PC-3 (cell line): ENCODE measurements at regions of chr12 and their contacts with region 1.

Region 1: GRCh38 chr12:15636060-15636890 is 152.9 kb downstream of the EPS8 start:
- DNase-seq: peak; percentile 33
- ATAC-seq: peak; percentile 48
- H3K4me3 ChIP-seq: no peak overlapping the region
- H3K27ac ChIP-seq: peak overlapping the region; percentile 92
- H3K4me1 ChIP-seq: peaks cover 57% of the 10 kb centered on the region
- H3K27me3 ChIP-seq: no peaks in the 10 kb centered on the region
- CTCF ChIP-seq: no peak; the same call in 1 of the 2 replicates

Region 2: DNA sequence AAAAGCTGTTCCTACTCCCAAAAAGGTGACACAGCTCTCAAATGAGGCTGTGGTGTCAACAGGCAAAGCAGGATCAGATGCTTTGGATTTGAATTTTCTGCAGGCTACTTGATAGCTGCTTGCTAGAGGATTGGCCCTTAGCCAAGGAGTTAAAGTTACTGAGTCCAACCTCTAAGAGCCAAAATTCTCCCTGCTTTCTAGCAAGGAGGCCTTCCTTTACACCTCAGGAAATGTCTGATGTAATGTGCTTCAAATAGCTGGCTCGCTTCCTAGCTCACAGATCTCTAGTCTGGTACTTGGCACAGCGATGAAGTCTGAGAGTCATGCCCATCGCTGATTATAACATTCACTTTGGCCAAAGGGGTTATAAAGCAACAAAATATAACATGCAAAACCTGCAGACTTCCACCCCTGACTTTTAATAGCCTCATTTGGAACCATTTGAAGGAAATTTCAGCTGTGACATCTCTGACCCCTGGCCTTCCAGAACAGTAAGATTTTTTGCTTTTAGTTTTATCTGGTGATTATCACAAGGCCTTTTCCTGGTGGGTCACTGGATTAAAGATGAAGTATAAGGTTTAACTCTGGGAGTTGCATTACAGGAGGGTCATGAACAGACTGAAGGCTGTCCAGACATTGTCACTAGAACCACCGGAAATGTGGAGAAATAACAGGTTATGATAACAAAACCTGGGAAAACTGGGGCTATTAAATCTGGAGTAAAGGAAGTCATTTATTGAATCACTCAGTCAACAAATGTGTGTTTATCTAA is 36.8 kb before region 1 on chr12:
- CTCF ChIA-PET with region 1: no interaction called
- POLR2A ChIA-PET with region 1: no interaction called
- intact Hi-C with region 1: no loop called
- DNase-seq: peak; percentile 81
- ATAC-seq: peak; percentile 52
- H3K4me3 ChIP-seq: no peak overlapping the region
- H3K27ac ChIP-seq: peak overlapping the region; percentile 98
- H3K4me1 ChIP-seq: peaks cover 42% of the 10 kb centered on the region
- H3K27me3 ChIP-seq: no peaks in the 10 kb centered on the region
- CTCF ChIP-seq: no peak

Region 3: GRCh38 chr12:15700595-15700994 is 64.3 kb after region 1 on chr12:
- CTCF ChIA-PET with region 1: no interaction called
- POLR2A ChIA-PET with region 1: no interaction called
- intact Hi-C with region 1: loop called (anchors 5 kb)
- DNase-seq: peak; percentile 79
- ATAC-seq: peak; percentile 78
- H3K4me3 ChIP-seq: no peak overlapping the region
- H3K27ac ChIP-seq: peak overlapping the region; percentile 86
- H3K4me1 ChIP-seq: peaks cover 33% of the 10 kb centered on the region
- H3K27me3 ChIP-seq: no peaks in the 10 kb centered on the region
- CTCF ChIP-seq: no peak

Region 4: DNA sequence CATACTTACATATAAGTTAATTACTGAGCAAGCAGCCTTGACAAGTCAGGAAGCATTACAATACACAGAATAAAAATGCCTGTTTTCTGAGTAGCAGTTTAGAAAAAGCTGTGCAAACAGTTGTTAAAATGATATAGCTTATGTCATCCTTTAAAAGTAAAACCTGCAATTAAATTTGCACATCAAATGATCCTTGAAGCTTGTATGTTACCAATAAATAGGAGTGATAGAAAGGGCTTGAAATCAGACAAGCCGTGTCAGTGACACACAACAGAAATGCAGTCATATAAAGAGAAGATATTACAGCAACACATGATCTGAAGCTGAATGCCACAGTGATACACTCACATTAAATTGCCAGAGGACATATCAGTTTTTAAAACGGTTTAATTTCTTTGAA is 83.0 kb after region 1 on chr12:
- CTCF ChIA-PET with region 1: no interaction called
- POLR2A ChIA-PET with region 1: no interaction called
- intact Hi-C with region 1: loop called (anchors 5 kb)
- DNase-seq: peak; percentile 34
- ATAC-seq: peak; percentile 75
- H3K4me3 ChIP-seq: no peak overlapping the region
- H3K27ac ChIP-seq: peak overlapping the region; percentile 85
- H3K4me1 ChIP-seq: peaks cover 40% of the 10 kb centered on the region
- H3K27me3 ChIP-seq: no peaks in the 10 kb centered on the region
- CTCF ChIP-seq: no peak

Region 5: DNA sequence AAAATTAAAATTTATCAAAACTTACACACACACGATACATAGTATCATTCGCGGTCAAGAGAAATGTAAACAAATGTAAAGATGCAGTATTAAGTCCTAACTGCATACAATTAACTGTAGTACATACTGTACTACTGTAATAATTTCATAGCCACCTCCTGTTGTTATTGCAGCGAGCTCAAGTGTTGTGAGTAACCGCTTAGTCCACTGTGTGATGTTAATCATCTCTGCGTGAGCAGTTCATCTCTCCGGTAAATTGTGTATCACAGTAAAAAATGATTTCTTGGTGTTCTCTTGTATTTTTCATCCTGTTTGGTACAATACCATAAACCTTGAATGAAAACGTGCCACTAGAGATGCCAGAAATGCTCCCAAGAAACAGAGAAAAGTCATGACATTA is 146.4 kb after region 1 on chr12:
- CTCF ChIA-PET with region 1: no interaction called
- POLR2A ChIA-PET with region 1: no interaction called
- intact Hi-C with region 1: loop called (anchors 5 kb)
- DNase-seq: no peak
- ATAC-seq: no peak
- H3K4me3 ChIP-seq: no peak overlapping the region
- H3K27ac ChIP-seq: no peak overlapping the region
- H3K4me1 ChIP-seq: peaks cover 48% of the 10 kb centered on the region
- H3K27me3 ChIP-seq: no peaks in the 10 kb centered on the region
- CTCF ChIP-seq: no peak

Region 6: DNA sequence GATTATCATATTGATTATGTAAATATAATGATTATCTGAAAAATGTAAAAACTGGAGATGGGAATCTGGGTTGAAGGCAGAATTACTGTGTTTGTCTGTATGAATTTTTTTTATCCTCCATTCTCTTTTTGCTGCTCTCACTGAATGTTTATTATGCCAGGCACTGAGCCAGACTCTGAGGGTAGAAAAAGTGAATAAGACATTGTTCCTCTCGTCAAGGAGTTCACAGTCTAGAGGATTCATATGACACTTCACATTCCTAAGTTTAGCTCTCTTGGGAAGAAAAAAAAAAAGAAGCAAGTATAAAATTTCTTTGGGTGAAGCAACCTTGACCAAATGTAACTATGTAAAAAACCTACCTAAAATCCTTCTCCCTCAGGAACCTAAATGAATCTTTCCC is 1090.6 kb after region 1 on chr12:
- CTCF ChIA-PET with region 1: no interaction called
- POLR2A ChIA-PET with region 1: no interaction called
- intact Hi-C with region 1: no loop called
- DNase-seq: no peak
- ATAC-seq: no peak
- H3K4me3 ChIP-seq: no peak overlapping the region
- H3K27ac ChIP-seq: no peak overlapping the region
- H3K4me1 ChIP-seq: no peaks in the 10 kb centered on the region
- H3K27me3 ChIP-seq: no peaks in the 10 kb centered on the region
- CTCF ChIP-seq: no peak